Activated CD4-positive, alpha-beta T cell treated with anti-CD3 and anti-CD28 coated beads for 36 hours (primary cell): ENCODE measurements at regions of chr1 and their contacts with region 1.

Region 1: GRCh38 chr1:155277070-155277895 is at the start of gene HCN3:
- DNase-seq: peak; percentile 97
- ATAC-seq: peak; percentile 68
- H3K4me3 Mint-ChIP-seq: peak within 1 kb of the TSS; percentile 63
- H3K27ac Mint-ChIP-seq: no peak within 1 kb of the TSS
- H3K4me1 Mint-ChIP-seq: peaks cover 31% of the 10 kb centered on the region
- H3K27me3 Mint-ChIP-seq: no peaks in the 10 kb centered on the region
- total RNA-seq, gene HCN3: 1.9 to 2.3 TPM

Region 2: GRCh38 chr1:155208541-155209311 is 68.6 kb before region 1 on chr1 and contains the start of gene MTX1:
- CTCF ChIA-PET with region 1: interaction called, 3 read pairs
- POLR2A ChIA-PET with region 1: no interaction called
- intact Hi-C with region 1: loop called in 1 of 2 experiments (anchors 1 kb)
- DNase-seq: peak; percentile 93
- ATAC-seq: peak; percentile 87
- H3K4me3 Mint-ChIP-seq: peak within 1 kb of the TSS; percentile 89
- H3K27ac Mint-ChIP-seq: peak within 1 kb of the TSS; percentile 86
- H3K4me1 Mint-ChIP-seq: peaks cover 29% of the 10 kb centered on the region
- H3K27me3 Mint-ChIP-seq: no peaks in the 10 kb centered on the region
- total RNA-seq, gene MTX1: 52.8 to 52.9 TPM

Region 3: GRCh38 chr1:155244368-155245162 is 32.7 kb before region 1 on chr1:
- CTCF ChIA-PET with region 1: interaction called, 4 read pairs
- POLR2A ChIA-PET with region 1: interaction called, 6 read pairs
- intact Hi-C with region 1: loop called in 1 of 2 experiments (anchors 2 kb)
- DNase-seq: peak; percentile 98
- ATAC-seq: peak; percentile 96
- H3K4me3 Mint-ChIP-seq: peak overlapping the region; percentile 80
- H3K27ac Mint-ChIP-seq: peak overlapping the region; percentile 90
- H3K4me1 Mint-ChIP-seq: peaks cover 44% of the 10 kb centered on the region
- H3K27me3 Mint-ChIP-seq: peaks cover 2% of the 10 kb centered on the region

Region 4: GRCh38 chr1:155261852-155262673 is 15.2 kb before region 1 on chr1 and contains the start of gene SCAMP3:
- CTCF ChIA-PET with region 1: interaction called, 13 read pairs
- POLR2A ChIA-PET with region 1: interaction called, 10 read pairs
- intact Hi-C with region 1: loop called (anchors 1 kb)
- DNase-seq: peak; percentile 93
- ATAC-seq: peak; percentile 95
- H3K4me3 Mint-ChIP-seq: peak within 1 kb of the TSS; percentile 98
- H3K27ac Mint-ChIP-seq: peak within 1 kb of the TSS; percentile 91
- H3K4me1 Mint-ChIP-seq: peaks cover 27% of the 10 kb centered on the region
- H3K27me3 Mint-ChIP-seq: no peaks in the 10 kb centered on the region
- total RNA-seq, gene SCAMP3: 82.0 to 95.5 TPM

Region 5: DNA sequence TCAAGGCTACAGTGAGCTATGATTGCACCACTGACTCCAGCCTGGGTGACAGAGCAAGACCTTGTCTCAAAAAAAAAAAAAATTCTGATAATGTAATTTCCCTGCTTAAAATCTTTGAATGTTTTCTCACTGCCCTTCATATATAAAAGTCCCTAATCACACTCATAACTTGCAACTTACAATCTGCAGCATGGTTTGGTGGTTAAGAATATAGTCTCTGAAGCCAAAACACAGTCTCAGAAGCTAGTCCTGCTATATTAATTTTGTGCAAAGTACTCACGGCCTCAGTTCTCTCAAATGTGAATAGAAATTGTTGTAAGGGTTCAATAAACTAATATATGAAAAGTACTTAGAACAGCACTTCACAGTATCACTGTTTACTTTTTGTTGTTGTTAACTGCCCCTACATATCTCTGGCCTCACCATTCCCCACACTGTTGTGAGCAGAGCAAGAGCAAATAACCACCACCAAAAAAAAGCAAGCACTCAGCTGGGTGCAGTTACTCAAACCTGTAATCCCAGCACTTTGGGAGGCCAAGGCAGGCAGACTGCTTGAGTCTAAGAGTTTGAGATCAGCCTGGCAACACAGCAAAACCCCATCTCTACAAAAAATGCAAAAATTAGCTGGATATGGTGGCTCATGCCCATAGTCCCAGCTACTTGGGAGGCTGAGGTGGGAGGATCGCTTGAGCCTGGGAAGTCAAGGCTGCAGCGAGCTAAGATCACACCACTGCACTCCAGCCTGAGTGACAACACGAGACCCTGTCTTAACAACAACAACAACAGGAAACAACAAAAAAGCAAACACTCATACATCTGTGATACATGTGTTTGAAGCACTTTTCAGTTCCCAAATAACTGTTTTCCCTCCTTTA is 263.0 kb after region 1 on chr1:
- CTCF ChIA-PET with region 1: no interaction called
- POLR2A ChIA-PET with region 1: no interaction called
- intact Hi-C with region 1: no loop called
- DNase-seq: peak; percentile 41
- ATAC-seq: no peak
- H3K4me3 Mint-ChIP-seq: no peak overlapping the region
- H3K27ac Mint-ChIP-seq: peak overlapping the region; percentile 86
- H3K4me1 Mint-ChIP-seq: peaks cover 61% of the 10 kb centered on the region
- H3K27me3 Mint-ChIP-seq: no peaks in the 10 kb centered on the region

Region 6: GRCh38 chr1:155609515-155610256 is 332.4 kb after region 1 on chr1 and contains the start of gene MSTO1:
- CTCF ChIA-PET with region 1: no interaction called
- POLR2A ChIA-PET with region 1: no interaction called
- intact Hi-C with region 1: loop called in 1 of 2 experiments (anchors 1 kb)
- DNase-seq: peak; percentile 100
- ATAC-seq: peak; percentile 97
- H3K4me3 Mint-ChIP-seq: peak within 1 kb of the TSS; percentile 95
- H3K27ac Mint-ChIP-seq: peak within 1 kb of the TSS; percentile 92
- H3K4me1 Mint-ChIP-seq: peaks cover 3% of the 10 kb centered on the region
- H3K27me3 Mint-ChIP-seq: no peaks in the 10 kb centered on the region
- total RNA-seq, gene MSTO1: 56.8 to 62.1 TPM

Region 7: DNA sequence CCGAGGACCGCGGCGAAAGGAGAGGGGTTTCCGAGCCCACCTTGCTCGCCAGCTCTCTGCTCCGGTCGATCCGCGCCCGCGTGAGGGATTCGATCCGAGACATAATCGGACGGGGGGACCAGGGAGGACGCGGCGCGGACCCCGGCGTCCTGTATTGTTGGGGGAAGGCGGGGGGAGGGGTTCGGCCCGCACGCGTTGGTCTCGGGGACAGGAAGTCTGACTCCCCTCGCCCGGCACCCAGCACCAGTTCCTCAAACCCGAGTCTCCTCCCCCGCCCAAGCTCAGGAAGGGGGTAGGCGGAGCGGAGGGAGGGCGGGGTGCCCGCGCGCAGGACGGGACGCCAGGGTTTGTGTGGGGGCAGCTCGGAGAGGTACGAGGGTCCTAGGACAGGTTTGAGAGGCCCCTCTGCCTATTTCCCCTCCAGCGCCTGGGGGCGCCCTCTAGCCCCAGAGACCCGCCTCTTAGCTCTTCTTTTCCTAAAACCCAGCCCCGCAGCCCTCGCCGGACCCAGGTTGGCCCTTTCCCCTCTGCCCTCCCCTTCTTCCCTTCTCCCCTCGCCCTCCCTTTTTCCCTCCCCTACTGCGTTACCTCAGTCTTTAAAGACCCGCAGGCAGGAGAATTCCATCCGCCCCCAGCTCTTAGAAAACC is 701.2 kb after region 1 on chr1 and contains the start of gene ARHGEF2:
- CTCF ChIA-PET with region 1: no interaction called
- POLR2A ChIA-PET with region 1: no interaction called
- intact Hi-C with region 1: loop called in 1 of 2 experiments (anchors 5 kb)
- DNase-seq: peak; percentile 88
- ATAC-seq: peak; percentile 57
- H3K4me3 Mint-ChIP-seq: peak within 1 kb of the TSS; percentile 100
- H3K27ac Mint-ChIP-seq: peak within 1 kb of the TSS; percentile 96
- H3K4me1 Mint-ChIP-seq: peaks cover 68% of the 10 kb centered on the region
- H3K27me3 Mint-ChIP-seq: no peaks in the 10 kb centered on the region
- total RNA-seq, gene ARHGEF2: 135 to 216 TPM